Naive thymus-derived CD4-positive, alpha-beta T cell (primary cell): ENCODE measurements at regions of chr6 and their contacts with region 1.

Region 1: GRCh38 chr6:90541221-90541620 is 45.7 kb downstream of the MAP3K7 start:
- DNase-seq: no peak
- ATAC-seq: no peak
- H3K4me3 ChIP-seq: no peak overlapping the region
- H3K4me3 Mint-ChIP-seq: no peak overlapping the region
- H3K27ac ChIP-seq: no peak overlapping the region
- H3K27ac Mint-ChIP-seq: no peak overlapping the region
- H3K4me1 ChIP-seq: no peaks in the 10 kb centered on the region
- H3K4me1 Mint-ChIP-seq: peaks cover 0 to 11% (median 0%) of the 10 kb centered on the region in 7 donors
- H3K27me3 ChIP-seq: no peaks in the 10 kb centered on the region
- H3K27me3 Mint-ChIP-seq: no peaks in the 10 kb centered on the region

Region 2: DNA sequence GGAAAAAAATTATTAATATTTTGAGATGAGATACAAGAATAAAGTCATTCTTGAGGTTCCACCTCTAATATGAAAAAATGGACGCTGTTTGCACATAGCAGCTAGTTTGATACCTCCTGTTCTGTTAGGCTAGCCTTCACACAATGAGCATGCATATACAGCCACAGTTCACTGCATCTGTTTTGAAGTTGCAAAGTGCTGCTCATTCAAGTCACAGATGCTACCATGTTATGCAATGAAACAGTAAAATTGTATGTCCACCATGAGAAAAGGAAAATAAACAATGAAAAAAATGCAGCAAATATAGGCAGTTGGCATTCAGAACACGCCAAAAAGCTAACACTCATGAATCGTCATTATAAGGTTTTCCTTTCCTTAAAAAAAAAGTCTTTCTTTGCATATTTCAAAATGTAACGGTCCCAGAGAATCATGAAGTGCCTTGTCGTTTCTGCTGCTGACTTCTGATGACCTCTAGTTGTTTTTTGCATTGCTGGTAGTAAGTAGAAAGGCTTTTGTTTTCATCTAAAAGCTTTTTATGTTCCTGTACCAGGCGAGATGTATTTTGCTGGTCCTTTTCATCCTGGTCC is 25.1 kb before region 1 on chr6:
- CTCF ChIA-PET with region 1: no interaction called
- POLR2A ChIA-PET with region 1: no interaction called
- intact Hi-C with region 1: loop called in 1 of 2 experiments (anchors 1 kb)
- DNase-seq: no peak
- ATAC-seq: no peak
- H3K4me3 ChIP-seq: no peak overlapping the region
- H3K4me3 Mint-ChIP-seq: no peak overlapping the region
- H3K27ac ChIP-seq: no peak overlapping the region
- H3K27ac Mint-ChIP-seq: no peak overlapping the region
- H3K4me1 ChIP-seq: no peaks in the 10 kb centered on the region
- H3K4me1 Mint-ChIP-seq: no peaks in the 10 kb centered on the region
- H3K27me3 ChIP-seq: no peaks in the 10 kb centered on the region
- H3K27me3 Mint-ChIP-seq: no peaks in the 10 kb centered on the region